ENCODE measurements at regions of chr12 and their contacts with region 1.

Region 1: DNA sequence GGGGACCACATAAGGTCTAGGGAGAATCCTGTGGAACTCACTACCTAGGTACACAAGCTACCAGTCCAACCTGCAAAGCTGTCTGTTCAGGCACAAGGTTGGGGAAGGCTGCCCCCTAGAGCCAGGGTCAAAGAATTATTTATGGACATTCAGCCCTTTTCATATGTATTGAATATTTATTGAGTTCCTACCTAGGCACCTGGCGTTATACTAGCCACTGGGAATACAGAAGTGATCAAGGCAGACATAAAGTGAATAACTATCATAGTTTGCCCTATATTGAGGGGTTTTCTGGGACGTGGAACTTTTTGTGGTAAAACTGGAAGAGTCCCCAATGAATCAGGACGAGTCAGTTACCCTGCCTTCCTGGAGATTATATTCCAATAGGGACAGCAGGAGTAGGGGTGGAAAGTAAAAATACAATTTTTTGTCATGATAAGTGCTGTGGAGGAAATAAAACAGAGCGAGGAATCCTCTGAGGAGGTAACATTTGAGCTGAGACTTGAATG is 5.8 kb upstream of the SLC48A1 start:
- DNase-seq: no peak
- H3K4me3 ChIP-seq: no peak overlapping the region
- CTCF ChIP-seq: peak; percentile 29

Region 2: DNA sequence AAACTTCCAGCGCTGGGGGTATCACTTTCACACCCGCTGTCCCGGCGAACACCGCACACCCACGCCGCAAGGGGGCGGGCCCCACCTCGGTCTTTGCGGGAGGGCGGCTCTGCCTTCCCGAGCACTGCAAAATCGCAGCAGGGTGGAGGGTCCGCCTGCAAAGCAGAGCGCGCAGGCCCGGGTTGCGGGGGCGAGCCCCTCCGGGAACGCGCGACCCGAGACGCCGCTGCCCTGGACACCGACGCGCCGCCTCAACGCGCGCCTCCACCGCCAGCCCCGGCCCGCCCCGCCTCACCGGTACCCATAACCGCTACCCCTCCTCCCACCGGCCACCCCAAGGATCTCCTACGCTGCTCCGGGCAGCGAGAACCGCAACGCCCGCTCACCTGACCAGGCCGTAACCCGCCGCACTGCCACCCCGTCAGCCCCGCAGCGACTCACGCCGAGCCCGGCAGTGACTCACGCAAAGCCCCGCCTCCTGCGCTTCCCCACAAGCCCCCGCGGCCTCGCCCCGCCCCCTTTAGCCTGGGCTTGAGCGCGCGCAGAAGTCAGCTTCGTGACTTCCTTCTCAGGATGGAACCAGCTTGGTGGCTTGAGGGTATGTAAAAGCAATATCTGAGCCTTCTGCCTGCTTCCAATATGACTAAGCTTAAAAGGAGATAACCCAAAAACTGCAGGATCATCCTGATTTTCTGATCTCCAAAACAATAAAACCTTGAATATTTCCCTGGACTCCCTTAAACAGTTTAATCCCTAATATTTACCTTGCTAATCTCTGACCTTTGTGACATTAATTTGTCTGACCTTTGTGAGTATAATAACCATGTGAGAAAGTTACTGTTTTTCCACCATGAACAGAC is 61.5 kb before region 1 on chr12 and contains the start of gene RPAP3:
- CTCF ChIA-PET with region 1: interaction called, 1,419 read pairs
- POLR2A ChIA-PET with region 1: interaction called, 3 read pairs
- DNase-seq: no peak
- H3K4me3 ChIP-seq: peak within 1 kb of the TSS; percentile 86
- CTCF ChIP-seq: peak; percentile 81

Region 3: DNA sequence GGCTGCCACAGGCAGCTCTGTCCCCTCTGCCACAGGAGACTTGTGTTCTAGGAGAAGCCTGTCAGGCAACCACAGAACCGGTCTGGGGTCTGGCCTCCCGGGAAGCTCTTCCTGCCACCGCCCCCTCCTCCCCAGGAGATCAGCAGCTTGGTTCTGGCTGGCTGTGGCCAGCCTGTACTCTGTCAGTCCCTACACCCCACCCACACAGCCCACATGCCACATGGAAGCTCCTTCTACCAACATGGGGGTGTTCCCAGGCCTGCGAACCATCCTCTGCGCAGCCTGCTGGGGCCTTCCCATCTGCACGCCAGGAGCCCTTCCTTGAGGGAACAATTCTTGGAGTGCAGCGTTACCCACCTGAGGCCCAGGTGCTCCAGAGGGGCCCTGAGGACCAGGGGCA is 212.9 kb after region 1 on chr12:
- CTCF ChIA-PET with region 1: no interaction called
- POLR2A ChIA-PET with region 1: no interaction called
- DNase-seq: no peak
- H3K4me3 ChIP-seq: no peak overlapping the region
- CTCF ChIP-seq: no peak